T-cell (primary cell): ENCODE measurements at regions of chr10 and their contacts with region 1.

Region 1: GRCh38 chr10:102962951-102963755 is 45.1 kb downstream of the CNNM2 start:
- DNase-seq: no peak
- ATAC-seq: no peak
- H3K4me3 ChIP-seq: no peak overlapping the region
- H3K4me3 Mint-ChIP-seq: no peak overlapping the region
- H3K27ac ChIP-seq: no peak overlapping the region
- H3K27ac Mint-ChIP-seq: no peak overlapping the region
- H3K4me1 ChIP-seq: no peaks in the 10 kb centered on the region
- H3K4me1 Mint-ChIP-seq: no peaks in the 10 kb centered on the region
- H3K27me3 ChIP-seq: no peaks in the 10 kb centered on the region
- H3K27me3 Mint-ChIP-seq: no peaks in the 10 kb centered on the region

Region 2: DNA sequence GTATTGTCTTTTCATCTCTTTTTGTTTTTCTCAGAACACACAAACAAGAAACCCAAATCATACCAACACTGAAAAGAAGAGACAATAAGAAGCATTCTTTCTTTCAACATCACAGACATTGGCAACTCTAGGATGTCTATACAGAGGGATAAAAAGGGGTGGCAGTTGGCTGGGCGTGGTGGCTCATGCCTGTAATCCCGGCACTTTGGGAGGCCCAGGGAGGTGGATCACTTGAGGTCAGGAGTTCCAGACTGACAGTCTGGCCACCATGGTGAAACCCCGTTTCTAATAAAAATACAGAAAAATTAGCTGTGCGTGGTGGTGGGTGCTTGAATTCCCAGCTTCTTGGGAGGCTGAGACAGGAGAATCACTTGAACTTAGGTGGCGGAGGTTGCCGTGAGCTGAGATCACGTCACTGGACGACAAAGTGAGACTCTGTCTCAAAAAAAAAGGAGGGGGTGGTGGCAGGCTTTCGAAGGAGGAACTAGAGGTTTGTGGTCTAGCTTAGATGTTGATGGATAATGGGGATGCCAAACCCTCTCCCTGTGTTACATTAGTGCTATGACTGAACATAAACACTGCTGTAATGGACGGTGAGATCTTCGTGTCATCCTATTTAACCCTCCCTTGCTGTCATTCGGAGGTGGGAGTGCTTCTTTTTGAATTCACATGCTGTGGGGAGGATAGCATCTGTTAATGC is 35.7 kb before region 1 on chr10:
- CTCF ChIA-PET with region 1: no interaction called
- POLR2A ChIA-PET with region 1: no interaction called
- DNase-seq: peak in 1 of 35 experiments; percentile 15
- ATAC-seq: peak in 1 of 4 experiments; percentile 47
- H3K4me3 ChIP-seq: no peak overlapping the region
- H3K4me3 Mint-ChIP-seq: no peak overlapping the region
- H3K27ac ChIP-seq: no peak overlapping the region
- H3K27ac Mint-ChIP-seq: no peak overlapping the region
- H3K4me1 ChIP-seq: peaks cover 0 to 5% of the 10 kb centered on the region in 2 experiments
- H3K4me1 Mint-ChIP-seq: peaks cover 29 to 34% (median 32%) of the 10 kb centered on the region in 3 donors
- H3K27me3 ChIP-seq: no peaks in the 10 kb centered on the region
- H3K27me3 Mint-ChIP-seq: no peaks in the 10 kb centered on the region

Region 3: DNA sequence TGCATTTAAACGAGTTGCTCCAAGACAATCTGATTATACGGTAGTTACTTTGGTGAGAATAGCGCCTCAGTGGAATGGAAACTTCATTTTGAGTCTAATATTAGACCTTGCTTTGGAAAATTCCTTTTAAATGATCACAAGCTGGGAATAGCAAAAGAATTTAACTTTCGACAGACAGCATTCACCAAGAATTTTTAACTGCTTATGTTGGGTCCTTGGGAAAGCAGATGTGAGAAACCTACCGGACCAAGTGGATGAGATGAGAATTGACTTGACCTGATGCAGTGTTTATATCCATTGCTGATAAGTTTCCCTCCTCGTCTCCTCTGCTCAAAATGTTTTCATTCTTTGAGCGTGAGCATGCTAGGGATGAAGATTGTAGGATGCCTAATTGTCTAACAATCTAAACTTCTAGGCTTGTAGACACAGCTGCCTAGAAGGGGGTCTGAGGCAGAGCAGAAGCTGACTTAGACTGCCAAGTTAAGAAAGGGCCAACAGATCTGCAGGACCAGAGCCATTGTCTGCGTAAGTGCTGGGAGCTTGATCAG is 81.9 kb after region 1 on chr10:
- CTCF ChIA-PET with region 1: no interaction called
- POLR2A ChIA-PET with region 1: interaction called in 1 of 2 experiments, 13 read pairs
- DNase-seq: no peak
- ATAC-seq: no peak
- H3K4me3 ChIP-seq: no peak overlapping the region
- H3K4me3 Mint-ChIP-seq: no peak overlapping the region
- H3K27ac ChIP-seq: no peak overlapping the region
- H3K27ac Mint-ChIP-seq: no peak overlapping the region
- H3K4me1 ChIP-seq: no peaks in the 10 kb centered on the region
- H3K4me1 Mint-ChIP-seq: no peaks in the 10 kb centered on the region
- H3K27me3 ChIP-seq: no peaks in the 10 kb centered on the region
- H3K27me3 Mint-ChIP-seq: no peaks in the 10 kb centered on the region

Region 4: DNA sequence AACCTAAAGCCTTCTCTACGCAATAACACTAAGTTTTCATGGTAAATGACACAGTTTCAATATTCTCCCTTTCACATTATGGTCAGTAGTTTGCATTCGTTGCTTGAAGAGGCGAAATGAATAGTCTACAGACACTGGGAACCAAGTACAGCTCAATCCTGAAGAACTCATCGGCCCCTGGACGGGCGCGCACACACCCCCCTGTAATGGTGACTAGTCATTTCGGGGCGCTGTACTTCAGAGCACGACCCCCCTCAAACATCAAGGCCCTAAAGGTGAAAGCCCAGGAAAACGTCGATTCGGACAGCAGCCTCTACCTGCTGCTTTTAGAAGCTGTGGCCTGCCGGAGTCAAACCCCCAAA is 228.9 kb after region 1 on chr10:
- CTCF ChIA-PET with region 1: no interaction called
- POLR2A ChIA-PET with region 1: no interaction called
- DNase-seq: peak in 3 of 35 experiments; percentile 2 to 4 (median 3)
- ATAC-seq: no peak
- H3K4me3 ChIP-seq: peak overlapping the region; percentile 91 to 93
- H3K4me3 Mint-ChIP-seq: peak overlapping the region; percentile 97 to 99 (median 99)
- H3K27ac ChIP-seq: peak overlapping the region; percentile 85
- H3K27ac Mint-ChIP-seq: peak overlapping the region; percentile 77 to 98
- H3K4me1 ChIP-seq: peaks cover 17 to 26% of the 10 kb centered on the region in 2 experiments
- H3K4me1 Mint-ChIP-seq: peaks cover 39 to 48% (median 48%) of the 10 kb centered on the region in 3 donors
- H3K27me3 ChIP-seq: no peaks in the 10 kb centered on the region
- H3K27me3 Mint-ChIP-seq: no peaks in the 10 kb centered on the region

Region 5: GRCh38 chr10:104296687-104297436 is 1333.7 kb after region 1 on chr10:
- CTCF ChIA-PET with region 1: no interaction called
- POLR2A ChIA-PET with region 1: interaction called in 1 of 2 experiments, 10 read pairs
- DNase-seq: no peak
- ATAC-seq: no peak
- H3K4me3 ChIP-seq: no peak overlapping the region
- H3K4me3 Mint-ChIP-seq: no peak overlapping the region
- H3K27ac ChIP-seq: no peak overlapping the region
- H3K27ac Mint-ChIP-seq: no peak overlapping the region
- H3K4me1 ChIP-seq: peaks cover 13 to 20% of the 10 kb centered on the region in 2 experiments
- H3K4me1 Mint-ChIP-seq: peaks cover 21 to 31% (median 24%) of the 10 kb centered on the region in 3 donors
- H3K27me3 ChIP-seq: peaks cover 0 to 9% of the 10 kb centered on the region in 2 experiments
- H3K27me3 Mint-ChIP-seq: peaks cover 0 to 11% of the 10 kb centered on the region in 2 donors